Lower leg skin (tissue), 4 donors: ENCODE measurements at regions of chr9 and their contacts with region 1.

Region 1: GRCh38 chr9:119334745-119335144 is 34.5 kb downstream of the BRINP1 start:
- DNase-seq: no peak
- H3K4me3 ChIP-seq: no peak overlapping the region
- CTCF ChIP-seq: no peak
- POLR2A ChIP-seq: no peak

Region 2: DNA sequence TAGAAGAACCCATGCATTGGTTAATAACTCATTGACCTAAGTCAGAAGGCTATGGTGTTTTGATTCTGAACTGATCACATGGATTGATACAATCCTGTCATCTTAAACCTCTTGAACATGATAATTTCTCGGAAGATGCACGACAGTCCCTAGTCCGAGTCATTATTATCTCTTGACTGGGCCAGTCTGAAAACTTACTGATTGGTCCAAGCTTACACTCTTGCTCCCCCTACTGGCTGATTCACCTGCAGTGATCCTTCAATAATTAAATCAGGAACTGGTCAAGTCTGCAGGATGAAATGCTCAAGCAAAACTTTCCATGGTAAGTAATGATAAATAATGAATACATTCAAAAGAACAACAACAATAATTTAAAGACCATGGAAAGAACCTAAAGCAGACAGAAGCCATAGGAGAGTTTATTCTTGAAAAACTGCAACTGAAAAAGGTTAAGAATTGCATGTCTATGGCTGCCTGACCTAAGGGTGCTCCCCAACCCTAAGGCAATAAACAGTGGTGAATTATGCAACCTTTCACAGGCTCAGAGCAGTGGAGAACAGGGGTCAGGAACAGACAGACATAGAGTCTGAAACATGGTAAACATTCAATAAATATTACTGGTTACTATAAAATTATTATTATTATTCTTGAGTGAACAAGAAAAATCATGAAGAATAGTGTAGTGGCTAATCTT is 44.9 kb before region 1 on chr9:
- intact Hi-C with region 1: loop called (anchors 1 kb)
- DNase-seq: peak in 1 of 2 donors; percentile 66
- H3K4me3 ChIP-seq: no peak overlapping the region
- CTCF ChIP-seq: peak in 1 of 3 donors; percentile 36
- POLR2A ChIP-seq: no peak